Body of pancreas (tissue), 4 donors: ENCODE measurements at regions of chr7 and their contacts with region 1.

Region 1: DNA sequence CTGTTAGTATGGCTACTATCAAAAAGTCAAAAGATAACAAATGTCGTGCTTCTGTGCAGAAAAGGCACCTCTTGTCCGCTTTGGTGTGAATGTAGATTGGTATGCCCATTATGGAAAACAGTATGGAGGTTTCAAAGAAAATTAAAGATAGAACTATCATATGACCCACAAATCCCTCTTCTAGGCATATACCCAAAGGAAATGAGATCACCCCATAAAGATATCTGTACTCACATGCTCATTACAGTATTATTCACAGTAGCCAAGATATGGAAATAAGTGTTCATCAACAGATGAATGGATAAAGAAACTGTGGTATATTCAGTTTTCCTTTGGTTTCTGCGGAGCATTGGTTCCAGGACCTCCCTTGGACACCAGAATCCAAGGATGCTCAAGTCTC is 180.5 kb upstream of the PPP1R3A start:
- DNase-seq: no peak
- ATAC-seq: no peak
- H3K4me3 ChIP-seq: no peak overlapping the region
- H3K27ac ChIP-seq: no peak overlapping the region
- H3K4me1 ChIP-seq: peaks cover 28% of the 10 kb centered on the region
- H3K27me3 ChIP-seq: no peaks in the 10 kb centered on the region
- CTCF ChIP-seq: no peak
- POLR2A ChIP-seq: no peak

Region 2: DNA sequence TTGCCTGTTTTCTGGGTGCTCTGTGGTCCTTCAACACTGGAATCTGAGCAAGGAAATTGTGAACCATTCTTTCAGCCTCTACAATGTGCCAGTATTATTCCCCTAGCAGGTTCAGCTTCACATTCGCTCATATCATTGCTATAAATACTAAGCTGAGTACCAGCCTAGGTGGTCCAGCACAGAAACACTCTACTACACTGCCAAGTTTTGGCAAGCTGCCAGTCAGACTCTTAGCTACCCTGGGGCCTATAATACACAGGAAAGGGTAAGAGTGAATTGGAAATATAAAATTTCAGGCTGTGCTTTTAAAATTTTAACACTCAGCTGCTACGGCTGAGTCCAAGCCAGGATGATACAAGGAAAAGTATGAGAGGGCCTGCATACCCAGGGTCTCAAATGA is 130.6 kb before region 1 on chr7:
- intact Hi-C with region 1: no loop called
- DNase-seq: no peak
- ATAC-seq: no peak
- H3K4me3 ChIP-seq: no peak overlapping the region
- H3K27ac ChIP-seq: no peak overlapping the region
- H3K4me1 ChIP-seq: no peaks in the 10 kb centered on the region
- H3K27me3 ChIP-seq: no peaks in the 10 kb centered on the region
- CTCF ChIP-seq: no peak
- POLR2A ChIP-seq: no peak

Region 3: GRCh38 chr7:114209968-114210367 is 110.6 kb after region 1 on chr7:
- intact Hi-C with region 1: no loop called
- DNase-seq: no peak
- ATAC-seq: no peak
- H3K4me3 ChIP-seq: no peak overlapping the region
- H3K27ac ChIP-seq: no peak overlapping the region
- H3K4me1 ChIP-seq: no peaks in the 10 kb centered on the region
- H3K27me3 ChIP-seq: no peaks in the 10 kb centered on the region
- CTCF ChIP-seq: no peak
- POLR2A ChIP-seq: no peak

Region 4: DNA sequence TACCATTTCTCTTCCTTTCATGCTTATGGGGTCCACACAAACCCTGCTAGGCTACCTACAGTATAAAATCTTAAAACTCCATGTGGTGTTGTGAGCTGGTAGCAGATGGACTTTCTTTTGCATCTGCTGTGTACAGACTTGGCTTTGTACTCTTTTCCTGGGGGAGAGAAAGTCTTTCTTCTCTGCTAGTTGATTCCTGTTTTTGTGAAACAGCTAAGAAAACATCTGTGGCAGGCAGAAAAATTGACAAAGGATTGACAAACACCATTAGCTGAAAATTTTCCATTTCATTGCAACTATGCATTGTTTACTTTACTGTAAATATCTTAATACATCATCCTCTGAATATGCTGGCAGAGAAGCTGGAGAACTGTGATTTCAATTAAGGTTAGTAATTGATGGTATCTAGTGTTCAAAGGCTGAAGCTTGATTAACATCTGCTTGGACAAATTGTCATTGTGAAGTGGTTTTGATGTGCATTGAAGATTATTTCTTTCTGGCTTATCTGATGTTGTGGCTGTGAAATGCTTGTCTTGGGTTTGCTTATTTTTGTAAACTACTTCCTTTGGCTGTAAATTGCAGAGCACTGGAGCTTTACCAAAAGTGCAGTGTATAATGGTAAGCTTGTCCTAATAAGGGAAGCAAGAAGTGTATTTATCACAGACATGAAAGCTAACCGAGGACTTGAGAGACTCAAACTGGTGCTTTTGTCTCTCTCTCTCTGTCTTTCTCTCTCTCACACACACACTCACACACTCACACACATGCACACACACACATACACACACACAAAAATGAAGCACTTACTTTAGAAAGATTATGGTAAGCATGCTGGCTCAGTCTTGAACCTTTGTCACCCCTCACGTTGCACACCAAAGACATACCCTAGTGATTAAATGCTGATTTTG is 315.1 kb after region 1 on chr7 and contains the start of gene FOXP2:
- intact Hi-C with region 1: loop called (anchors 10 kb)
- DNase-seq: no peak
- ATAC-seq: peak; percentile 52
- H3K4me3 ChIP-seq: no peak within 1 kb of the TSS
- H3K27ac ChIP-seq: peak within 1 kb of the TSS; percentile 43 to 67 (median 54)
- H3K4me1 ChIP-seq: peaks cover 16% of the 10 kb centered on the region
- H3K27me3 ChIP-seq: no peaks in the 10 kb centered on the region
- CTCF ChIP-seq: no peak
- POLR2A ChIP-seq: no peak
- total RNA-seq, gene FOXP2: 15.5 to 16.6 TPM